Stomach (tissue), 19 donors: ENCODE measurements at regions of chr1 and their contacts with region 1.

Region 1: GRCh38 chr1:29202584-29203340 is 21.1 kb upstream of the SRSF4 start:
- DNase-seq: peak; percentile 97 to 98
- H3K4me3 ChIP-seq: no peak overlapping the region
- H3K27ac ChIP-seq: peak overlapping the region; percentile 9 to 87 (median 77)
- H3K4me1 ChIP-seq: peaks cover 9 to 18% (median 11%) of the 10 kb centered on the region in 4 donors
- H3K27me3 ChIP-seq: no peaks in the 10 kb centered on the region
- CTCF ChIP-seq: peak in 6 of 7 experiments; percentile 87 to 97 (median 96)
- EP300 ChIP-seq: no peak
- POLR2A ChIP-seq: no peak

Region 2: DNA sequence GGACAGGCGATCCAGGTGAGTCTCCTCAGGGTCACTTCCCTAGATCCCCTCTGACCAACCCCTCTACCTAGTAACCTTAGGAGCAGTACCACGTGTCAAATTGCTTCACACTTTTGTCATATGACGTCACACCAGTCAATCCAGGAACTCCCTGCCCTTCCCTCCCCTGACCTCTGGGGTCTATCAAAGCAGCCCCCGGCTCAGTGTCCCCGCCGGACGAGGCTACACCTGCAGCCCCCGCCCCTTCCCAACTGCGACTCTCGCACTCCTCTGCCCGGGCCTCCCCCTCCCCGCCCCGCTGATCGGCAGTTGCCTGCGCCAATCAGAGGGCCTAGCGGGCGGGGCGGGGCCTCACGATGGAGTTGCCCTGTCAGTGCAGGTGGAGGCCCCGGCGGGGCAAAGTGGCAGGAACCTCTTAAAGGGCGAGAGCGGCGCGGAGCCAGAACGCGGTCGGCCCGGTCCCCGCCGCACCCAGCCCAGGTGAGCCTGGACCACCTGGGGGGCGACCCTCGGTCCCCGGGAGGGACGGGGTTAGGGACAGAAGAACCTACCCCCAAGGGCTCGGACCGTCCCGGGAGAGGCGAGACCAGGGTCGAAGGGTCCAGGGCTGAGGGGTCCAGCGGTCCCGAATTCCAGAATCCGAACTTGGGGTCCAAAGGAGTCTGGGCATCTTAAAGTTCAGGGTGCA is 315.9 kb before region 1 on chr1:
- intact Hi-C with region 1: loop called (anchors 10 kb)
- DNase-seq: peak; percentile 92 to 96
- H3K4me3 ChIP-seq: peak overlapping the region; percentile 63 to 96 (median 72)
- H3K27ac ChIP-seq: peak overlapping the region; percentile 78 to 86 (median 82)
- H3K4me1 ChIP-seq: peaks cover 38 to 66% (median 61%) of the 10 kb centered on the region in 4 donors
- H3K27me3 ChIP-seq: no peaks in the 10 kb centered on the region
- CTCF ChIP-seq: no peak
- EP300 ChIP-seq: no peak
- POLR2A ChIP-seq: peak in 1 of 4 donors; percentile 22

Region 3: GRCh38 chr1:29145739-29146437 is 56.9 kb before region 1 on chr1:
- intact Hi-C with region 1: no loop called
- DNase-seq: peak; percentile 20 to 62
- H3K4me3 ChIP-seq: no peak overlapping the region
- H3K27ac ChIP-seq: no peak overlapping the region
- H3K4me1 ChIP-seq: peaks cover 0 to 11% (median 4%) of the 10 kb centered on the region in 4 donors
- H3K27me3 ChIP-seq: no peaks in the 10 kb centered on the region
- CTCF ChIP-seq: no peak
- EP300 ChIP-seq: no peak
- POLR2A ChIP-seq: no peak